Gastrocnemius medialis (tissue), 4 donors: ENCODE measurements at regions of chr4 and their contacts with region 1.

Region 1: GRCh38 chr4:83261307-83261706 is 23.3 kb downstream of the COQ2 start:
- DNase-seq: no peak
- ATAC-seq: no peak
- H3K4me3 ChIP-seq: no peak overlapping the region
- H3K27ac ChIP-seq: peak overlapping the region; percentile 4 to 40 (median 25)
- H3K4me1 ChIP-seq: peaks cover 12 to 22% of the 10 kb centered on the region in 2 donors
- H3K27me3 ChIP-seq: no peaks in the 10 kb centered on the region
- CTCF ChIP-seq: no peak
- POLR2A ChIP-seq: no peak

Region 2: GRCh38 chr4:82469791-82470345 is 791.4 kb before region 1 on chr4:
- in situ Hi-C with region 1: loop called (anchors 5 to 25 kb)
- intact Hi-C with region 1: no loop called
- DNase-seq: no peak
- ATAC-seq: no peak
- H3K4me3 ChIP-seq: no peak overlapping the region
- H3K27ac ChIP-seq: no peak overlapping the region
- H3K4me1 ChIP-seq: no peaks in the 10 kb centered on the region
- H3K27me3 ChIP-seq: no peaks in the 10 kb centered on the region
- CTCF ChIP-seq: no peak
- POLR2A ChIP-seq: no peak

Region 3: DNA sequence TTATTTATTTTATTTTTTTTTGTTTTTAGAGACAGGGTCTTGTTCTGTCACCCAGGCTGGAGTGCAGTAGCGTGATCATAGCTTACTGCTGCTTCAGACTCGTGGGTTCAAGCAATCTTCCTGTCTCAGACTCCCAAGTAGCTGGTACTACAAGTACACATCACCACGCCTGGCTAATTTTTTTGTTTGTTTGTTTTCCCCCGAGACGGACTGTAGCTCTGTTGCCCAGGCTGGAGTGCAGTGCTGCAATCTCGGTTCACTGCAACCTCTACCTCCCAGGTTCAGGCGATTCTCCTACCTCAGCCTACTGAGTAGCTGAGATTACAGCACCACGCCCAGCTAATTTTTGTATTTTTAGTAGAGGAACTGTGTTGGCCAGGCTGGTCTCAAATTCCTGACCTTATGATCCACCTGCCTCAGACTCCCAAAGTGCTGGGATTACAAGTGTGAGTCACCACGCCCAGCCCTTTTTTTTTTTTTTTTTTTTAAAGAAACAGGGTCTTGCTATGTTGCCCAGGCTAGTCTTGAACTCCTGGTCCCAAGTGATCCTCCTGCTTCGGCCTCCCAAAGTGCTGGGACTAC is 194.2 kb before region 1 on chr4:
- in situ Hi-C with region 1: loop called in 2 of 4 experiments (anchors 5 to 10 kb)
- intact Hi-C with region 1: no loop called
- DNase-seq: no peak
- ATAC-seq: peak in 1 of 2 donors; percentile 84
- H3K4me3 ChIP-seq: no peak overlapping the region
- H3K27ac ChIP-seq: peak overlapping the region in 1 of 4 donors; percentile 46
- H3K4me1 ChIP-seq: no peaks in the 10 kb centered on the region
- H3K27me3 ChIP-seq: no peaks in the 10 kb centered on the region
- CTCF ChIP-seq: no peak
- POLR2A ChIP-seq: no peak

Region 4: DNA sequence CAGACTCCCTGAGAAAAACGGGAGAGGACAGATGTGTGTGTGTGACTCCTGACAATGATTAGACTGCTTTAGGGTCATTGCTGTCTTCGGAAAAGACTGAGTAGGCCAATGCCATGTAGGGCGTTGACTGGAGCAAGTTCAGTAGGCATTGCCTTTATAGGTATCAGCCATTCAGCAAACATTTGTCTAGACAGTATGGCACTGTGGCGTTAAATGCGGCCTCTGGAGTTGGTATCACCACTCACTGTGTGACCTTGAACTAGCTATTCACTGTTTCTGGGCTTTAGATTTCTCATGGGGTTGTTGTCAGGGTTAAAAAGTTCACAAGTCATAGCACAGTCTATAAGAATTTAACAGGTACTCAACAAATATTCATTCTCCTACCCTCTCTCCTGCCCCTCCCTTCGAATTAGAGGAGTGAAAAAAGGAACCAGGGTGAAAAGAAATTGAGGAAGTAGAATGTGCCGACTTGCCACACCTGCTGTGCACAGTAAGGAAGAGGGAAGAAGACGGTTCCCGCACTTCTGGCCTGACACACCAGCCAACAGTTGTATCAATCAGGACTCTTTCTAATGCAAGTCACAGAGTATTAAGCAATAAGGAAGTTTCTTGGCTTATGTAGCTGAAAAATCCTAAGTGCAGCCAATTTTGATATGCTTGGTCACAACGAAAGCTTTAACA is 63.6 kb before region 1 on chr4:
- in situ Hi-C with region 1: no loop called
- intact Hi-C with region 1: no loop called
- DNase-seq: peak in 1 of 2 donors; percentile 27
- ATAC-seq: no peak
- H3K4me3 ChIP-seq: no peak overlapping the region
- H3K27ac ChIP-seq: no peak overlapping the region
- H3K4me1 ChIP-seq: no peaks in the 10 kb centered on the region
- H3K27me3 ChIP-seq: no peaks in the 10 kb centered on the region
- CTCF ChIP-seq: no peak
- POLR2A ChIP-seq: no peak